ENCODE measurements at regions of chr17 and their contacts with region 1.

Region 1: DNA sequence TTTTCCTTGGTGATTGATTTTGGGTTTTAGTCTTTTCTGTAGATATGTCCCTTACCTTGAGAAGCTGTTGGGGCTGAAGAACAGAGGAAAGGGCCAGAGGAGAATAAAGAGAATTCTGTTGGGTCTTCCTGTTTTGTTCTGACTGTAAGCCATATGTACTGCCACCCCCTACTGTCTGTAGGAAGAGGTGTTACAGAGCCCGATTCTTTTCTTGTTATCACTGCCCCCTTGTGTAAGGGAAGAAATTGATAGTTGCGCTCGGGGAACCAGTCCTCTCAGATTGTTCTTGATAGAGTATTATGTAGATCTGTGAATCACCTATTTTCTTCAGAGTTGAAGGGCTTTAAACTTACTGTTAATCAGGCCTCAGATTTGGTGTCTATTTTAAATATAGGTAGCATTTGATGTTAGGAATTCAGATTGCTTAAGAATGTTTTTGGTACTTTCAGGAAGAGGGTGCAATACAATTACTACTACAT is 2.4 kb downstream of the TANC2 start:
- DNase-seq: peak; percentile 96
- ATAC-seq: peak; percentile 62
- H3K4me3 ChIP-seq: peak overlapping the region; percentile 88
- H3K27ac ChIP-seq: no peak overlapping the region
- H3K4me1 ChIP-seq: peaks cover 45% of the 10 kb centered on the region
- H3K27me3 ChIP-seq: no peaks in the 10 kb centered on the region
- CTCF ChIP-seq: peak; percentile 100

Region 2: GRCh38 chr17:62671583-62672312 is 296.7 kb before region 1 on chr17:
- CTCF ChIA-PET with region 1: no interaction called
- POLR2A ChIA-PET with region 1: no interaction called
- intact Hi-C with region 1: loop called (anchors 1 kb)
- DNase-seq: no peak
- ATAC-seq: peak; percentile 29
- H3K4me3 ChIP-seq: no peak overlapping the region
- H3K27ac ChIP-seq: no peak overlapping the region
- H3K4me1 ChIP-seq: peaks cover 6% of the 10 kb centered on the region
- H3K27me3 ChIP-seq: no peaks in the 10 kb centered on the region
- CTCF ChIP-seq: no peak

Region 3: DNA sequence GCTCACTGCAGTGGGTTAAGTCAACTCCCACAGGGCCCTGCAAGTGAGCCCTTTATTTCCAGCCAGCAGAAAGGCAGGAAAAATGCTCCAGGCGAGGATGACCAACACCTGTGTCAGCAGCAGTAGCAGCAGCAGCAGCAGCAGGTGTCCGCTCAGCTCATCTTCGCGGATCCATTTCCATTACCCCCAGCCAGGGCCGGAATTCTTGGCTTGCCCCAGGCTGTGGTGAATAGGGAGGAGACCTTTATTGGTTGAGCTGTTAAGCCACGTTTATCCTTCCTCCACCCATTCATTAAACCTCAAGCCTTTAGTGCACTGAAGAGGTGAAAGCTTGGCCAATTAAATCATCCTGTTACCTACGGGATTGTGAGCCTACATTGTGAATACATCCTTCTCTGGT is 206.6 kb before region 1 on chr17:
- CTCF ChIA-PET with region 1: interaction called, 6 read pairs
- POLR2A ChIA-PET with region 1: interaction called, 3 read pairs
- intact Hi-C with region 1: loop called (anchors 5 kb)
- DNase-seq: peak; percentile 99
- ATAC-seq: peak; percentile 99
- H3K4me3 ChIP-seq: no peak overlapping the region
- H3K27ac ChIP-seq: peak overlapping the region; percentile 37
- H3K4me1 ChIP-seq: peaks cover 27% of the 10 kb centered on the region
- H3K27me3 ChIP-seq: no peaks in the 10 kb centered on the region
- CTCF ChIP-seq: no peak

Region 4: GRCh38 chr17:62791751-62792445 is 176.6 kb before region 1 on chr17:
- CTCF ChIA-PET with region 1: no interaction called
- POLR2A ChIA-PET with region 1: no interaction called
- intact Hi-C with region 1: loop called (anchors 1 kb)
- DNase-seq: peak; percentile 98
- ATAC-seq: peak; percentile 61
- H3K4me3 ChIP-seq: peak overlapping the region; percentile 27
- H3K27ac ChIP-seq: peak overlapping the region; percentile 89
- H3K4me1 ChIP-seq: peaks cover 53% of the 10 kb centered on the region
- H3K27me3 ChIP-seq: no peaks in the 10 kb centered on the region
- CTCF ChIP-seq: no peak

Region 5: GRCh38 chr17:62876673-62877401 is 91.6 kb before region 1 on chr17:
- CTCF ChIA-PET with region 1: interaction called, 3 read pairs
- POLR2A ChIA-PET with region 1: interaction called, 4 read pairs
- intact Hi-C with region 1: loop called (anchors 1 kb)
- DNase-seq: peak; percentile 83
- ATAC-seq: peak; percentile 86
- H3K4me3 ChIP-seq: peak overlapping the region; percentile 0; the same call in 1 of the 2 replicates
- H3K27ac ChIP-seq: peak overlapping the region; percentile 60
- H3K4me1 ChIP-seq: peaks cover 24% of the 10 kb centered on the region
- H3K27me3 ChIP-seq: no peaks in the 10 kb centered on the region
- CTCF ChIP-seq: no peak

Region 6: DNA sequence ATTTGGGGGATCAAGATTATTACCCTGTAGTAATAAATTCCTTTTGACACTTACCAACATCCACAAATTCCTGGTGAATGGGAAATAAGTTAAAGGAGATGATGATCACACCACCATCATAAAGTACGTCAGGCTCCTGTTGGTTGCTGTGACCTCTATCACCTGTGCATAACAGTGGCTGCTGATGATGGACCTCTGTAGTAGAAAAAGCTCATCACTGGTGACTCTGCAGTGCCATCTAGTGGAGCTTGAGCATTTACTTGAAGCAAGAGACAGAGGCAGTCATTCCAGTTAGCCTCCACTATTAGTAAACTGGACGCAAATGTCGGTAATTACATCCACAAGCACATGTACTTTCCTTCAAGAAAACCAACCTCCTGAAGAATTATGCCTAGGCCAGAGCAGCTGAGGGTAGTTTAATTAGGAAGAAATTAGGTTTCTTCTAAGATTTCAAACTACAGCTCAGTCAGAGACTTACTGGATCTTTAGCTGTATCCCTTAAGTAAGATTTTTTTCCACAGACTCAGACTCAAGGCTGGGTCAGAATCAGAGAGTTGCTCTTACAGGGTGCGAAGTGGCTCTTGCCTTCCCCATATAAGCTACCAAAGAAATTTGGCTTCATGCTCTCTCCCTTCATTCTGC is 438.3 kb after region 1 on chr17:
- CTCF ChIA-PET with region 1: no interaction called
- POLR2A ChIA-PET with region 1: no interaction called
- intact Hi-C with region 1: loop called (anchors 2 kb)
- DNase-seq: peak; percentile 97
- ATAC-seq: peak; percentile 92
- H3K4me3 ChIP-seq: no peak overlapping the region
- H3K27ac ChIP-seq: no peak overlapping the region
- H3K4me1 ChIP-seq: peaks cover 11% of the 10 kb centered on the region
- H3K27me3 ChIP-seq: no peaks in the 10 kb centered on the region
- CTCF ChIP-seq: peak; percentile 98